Activated CD8-positive, alpha-beta T cell treated with anti-CD3 and anti-CD28 coated beads for 36 hours (primary cell): ENCODE measurements at regions of chr3 and their contacts with region 1.

Region 1: GRCh38 chr3:128794770-128795649 is 69.0 kb downstream of the RAB7A start:
- DNase-seq: peak; percentile 78
- ATAC-seq: peak; percentile 74
- H3K4me3 Mint-ChIP-seq: peak overlapping the region; percentile 48
- H3K27ac Mint-ChIP-seq: peak overlapping the region; percentile 90
- H3K4me1 Mint-ChIP-seq: peaks cover 87% of the 10 kb centered on the region
- H3K27me3 Mint-ChIP-seq: no peaks in the 10 kb centered on the region
- CTCF ChIP-seq: peak; percentile 85

Region 2: DNA sequence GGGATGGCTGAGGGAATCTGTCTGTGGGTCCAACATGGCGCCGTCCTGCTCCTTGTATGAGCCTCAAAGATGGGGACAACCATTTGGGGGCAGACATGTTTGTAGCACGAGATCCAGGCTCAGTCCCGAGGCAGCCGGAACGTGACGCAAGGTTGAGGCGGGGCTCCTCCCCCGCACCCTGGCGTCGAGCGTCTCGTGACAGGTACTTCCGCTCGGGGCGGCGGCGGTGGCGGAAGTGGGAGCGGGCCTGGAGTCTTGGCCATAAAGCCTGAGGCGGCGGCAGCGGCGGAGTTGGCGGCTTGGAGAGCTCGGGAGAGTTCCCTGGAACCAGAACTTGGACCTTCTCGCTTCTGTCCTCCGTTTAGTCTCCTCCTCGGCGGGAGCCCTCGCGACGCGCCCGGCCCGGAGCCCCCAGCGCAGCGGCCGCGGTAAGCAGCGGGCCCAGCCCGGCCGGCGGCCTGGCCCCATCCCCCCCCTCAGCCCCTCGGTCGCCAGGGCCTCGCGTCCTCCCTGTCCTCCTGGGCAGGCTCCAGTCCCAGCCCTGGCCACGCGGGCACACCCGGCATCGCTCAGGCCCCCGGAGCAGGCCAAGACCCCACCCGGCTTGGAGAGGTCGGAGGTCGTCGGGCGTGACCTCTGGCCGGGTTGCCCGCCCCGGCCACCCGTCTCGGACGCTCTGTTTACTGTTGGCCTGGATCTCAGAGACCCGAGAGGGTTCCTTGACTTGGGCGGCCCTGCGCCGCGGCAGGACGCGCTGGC is 68.9 kb before region 1 on chr3 and contains the start of gene RAB7A:
- CTCF ChIA-PET with region 1: interaction called, 16 read pairs
- POLR2A ChIA-PET with region 1: interaction called, 6 read pairs
- intact Hi-C with region 1: loop called (anchors 5 kb)
- DNase-seq: peak; percentile 98
- ATAC-seq: peak; percentile 90
- H3K4me3 Mint-ChIP-seq: peak within 1 kb of the TSS; percentile 100
- H3K27ac Mint-ChIP-seq: peak within 1 kb of the TSS; percentile 97
- H3K4me1 Mint-ChIP-seq: peaks cover 50% of the 10 kb centered on the region
- H3K27me3 Mint-ChIP-seq: no peaks in the 10 kb centered on the region
- CTCF ChIP-seq: no peak
- total RNA-seq, gene RAB7A: 304 to 322 TPM

Region 3: GRCh38 chr3:128745742-128746141 is 49.3 kb before region 1 on chr3:
- CTCF ChIA-PET with region 1: interaction called, 11 read pairs
- POLR2A ChIA-PET with region 1: interaction called, 4 read pairs
- intact Hi-C with region 1: no loop called
- DNase-seq: no peak
- ATAC-seq: no peak
- H3K4me3 Mint-ChIP-seq: no peak overlapping the region
- H3K27ac Mint-ChIP-seq: no peak overlapping the region
- H3K4me1 Mint-ChIP-seq: peaks cover 45% of the 10 kb centered on the region
- H3K27me3 Mint-ChIP-seq: no peaks in the 10 kb centered on the region
- CTCF ChIP-seq: no peak

Region 4: GRCh38 chr3:128767094-128767750 is 27.8 kb before region 1 on chr3:
- CTCF ChIA-PET with region 1: interaction called, 10 read pairs
- POLR2A ChIA-PET with region 1: interaction called, 3 read pairs
- intact Hi-C with region 1: no loop called
- DNase-seq: no peak
- ATAC-seq: no peak
- H3K4me3 Mint-ChIP-seq: no peak overlapping the region
- H3K27ac Mint-ChIP-seq: peak overlapping the region; percentile 62
- H3K4me1 Mint-ChIP-seq: peaks cover 78% of the 10 kb centered on the region
- H3K27me3 Mint-ChIP-seq: no peaks in the 10 kb centered on the region
- CTCF ChIP-seq: no peak